ENCODE measurements at regions of chr16 and their contacts with region 1.

Region 1: DNA sequence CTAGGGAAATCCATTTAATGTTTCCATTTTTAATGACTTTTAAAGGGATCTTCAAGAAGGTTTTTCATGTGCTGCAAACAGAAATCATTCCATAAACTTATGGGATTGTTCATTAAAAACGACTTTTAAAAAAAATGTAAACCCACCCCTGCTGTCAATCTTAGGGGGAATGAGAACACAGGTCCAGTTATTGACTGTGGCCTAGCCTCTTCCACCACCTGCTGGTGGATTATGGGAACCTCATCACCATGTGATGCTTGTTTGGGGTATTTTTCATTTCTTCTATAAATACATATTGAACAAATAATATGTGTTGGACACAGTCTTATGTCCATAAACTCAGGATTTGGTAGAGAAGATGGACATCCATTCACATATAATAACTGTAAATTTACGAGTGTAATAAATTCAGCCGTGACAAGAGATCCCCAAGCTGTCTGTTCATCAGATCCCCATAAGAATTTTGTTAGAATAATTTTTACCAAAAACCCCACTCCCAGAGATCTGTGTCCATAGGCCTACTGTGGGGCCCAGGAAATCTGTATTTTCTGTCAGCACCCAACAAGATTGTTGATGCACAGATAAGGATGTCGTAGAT is 42.0 kb upstream of the TMC5 start:
- DNase-seq: peak in 6 of 10 donors; percentile 18 to 89 (median 43)

Region 2: DNA sequence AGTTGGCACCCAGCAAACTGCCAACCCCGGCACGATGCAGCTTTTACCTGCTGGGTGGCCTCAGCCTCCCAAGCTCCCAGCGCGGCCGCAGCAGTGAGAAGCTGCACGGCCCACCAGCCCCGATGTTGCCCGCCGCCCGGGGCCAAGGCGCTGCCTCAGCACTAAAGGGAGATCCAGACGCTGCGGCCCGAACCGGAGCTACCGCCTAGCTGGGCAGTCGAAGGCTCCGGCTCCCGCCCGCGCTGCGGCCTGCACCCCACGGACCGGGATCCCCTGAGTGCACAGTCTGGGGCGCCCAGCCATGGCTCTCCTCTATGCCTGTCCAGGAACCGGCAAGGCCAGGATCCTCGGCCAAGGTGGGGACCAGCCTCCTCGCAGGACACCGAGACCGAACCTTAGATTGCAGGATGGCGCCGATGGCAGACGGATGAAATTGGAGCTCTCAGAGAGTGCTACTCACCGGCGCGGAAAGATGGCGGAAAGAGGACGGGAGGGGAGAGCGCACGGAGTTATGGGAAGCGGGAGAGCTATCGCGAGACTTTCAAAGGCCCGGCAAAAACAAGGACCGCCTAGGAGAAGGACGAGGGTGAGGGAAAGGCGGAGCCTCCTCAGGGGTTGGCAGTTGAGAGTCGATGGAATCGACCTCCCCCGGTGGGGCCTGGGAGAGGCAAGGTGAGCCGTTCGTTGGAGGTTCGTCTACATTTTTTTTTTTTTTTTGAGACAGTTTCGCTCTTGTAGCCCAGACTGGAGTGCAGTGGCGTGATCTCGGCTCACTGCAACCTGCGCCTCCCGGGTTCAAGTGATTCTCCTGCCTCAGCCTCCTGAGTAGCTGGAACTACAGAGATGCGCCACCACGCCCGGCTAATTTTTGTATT is 585.6 kb before region 1 on chr16 and contains the start of gene RPS15A:
- intact Hi-C with region 1: loop called (anchors 10 kb)
- DNase-seq: peak; percentile 89 to 99 (median 92)

Region 3: GRCh38 chr16:18983565-18984424 is 391.9 kb before region 1 on chr16 and contains the start of gene TMC7:
- intact Hi-C with region 1: loop called (anchors 10 kb)
- DNase-seq: peak; percentile 82 to 99 (median 94)

Region 4: DNA sequence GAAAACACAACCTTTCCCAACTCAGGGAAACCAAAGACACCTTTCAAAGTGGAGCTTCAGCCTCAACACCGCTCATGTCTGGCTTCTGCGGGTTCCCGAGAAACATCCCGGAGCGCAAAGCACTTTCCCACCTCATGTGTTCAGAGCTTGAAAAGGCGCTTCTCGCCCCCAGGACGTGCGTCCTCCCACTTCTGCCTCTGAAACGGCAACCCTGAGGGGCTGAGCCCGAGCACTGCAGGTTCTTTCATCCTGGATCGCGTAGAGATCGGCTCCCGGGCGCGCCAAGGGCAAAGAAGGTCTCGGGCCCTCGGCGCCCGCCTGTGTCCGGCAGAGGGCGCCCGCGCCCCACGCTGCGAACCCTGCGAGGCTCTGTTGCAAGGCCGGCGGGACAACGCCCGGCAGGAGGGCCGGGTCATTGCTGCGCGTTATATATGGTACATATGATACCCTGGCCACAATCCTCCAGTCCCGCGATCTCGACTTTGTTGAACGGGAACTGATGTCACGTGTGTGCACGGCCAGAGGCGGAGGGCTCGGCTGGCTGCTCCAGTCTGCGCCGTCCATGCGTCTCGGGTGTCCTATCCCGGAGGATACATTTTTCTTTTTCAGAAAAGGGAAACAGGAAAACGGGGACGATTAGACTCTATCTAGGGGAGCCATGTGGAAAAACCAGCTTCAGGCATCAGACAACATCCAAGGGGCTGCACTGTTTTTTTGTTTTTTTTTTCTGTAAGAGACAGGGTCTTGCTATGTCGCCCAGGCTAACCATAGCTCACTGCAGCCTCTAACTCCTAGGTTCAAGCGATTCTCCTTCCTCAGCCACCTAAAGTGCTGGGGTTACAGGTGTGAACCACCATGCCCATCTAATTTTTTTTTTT is 289.1 kb before region 1 on chr16:
- intact Hi-C with region 1: loop called (anchors 1 kb)
- DNase-seq: peak; percentile 58 to 97 (median 82)

Region 5: GRCh38 chr16:19167710-19168370 is 207.8 kb before region 1 on chr16 and contains the start of gene SYT17:
- intact Hi-C with region 1: loop called (anchors 5 kb)
- DNase-seq: peak in 9 of 10 donors; percentile 28 to 94 (median 52)

Region 6: DNA sequence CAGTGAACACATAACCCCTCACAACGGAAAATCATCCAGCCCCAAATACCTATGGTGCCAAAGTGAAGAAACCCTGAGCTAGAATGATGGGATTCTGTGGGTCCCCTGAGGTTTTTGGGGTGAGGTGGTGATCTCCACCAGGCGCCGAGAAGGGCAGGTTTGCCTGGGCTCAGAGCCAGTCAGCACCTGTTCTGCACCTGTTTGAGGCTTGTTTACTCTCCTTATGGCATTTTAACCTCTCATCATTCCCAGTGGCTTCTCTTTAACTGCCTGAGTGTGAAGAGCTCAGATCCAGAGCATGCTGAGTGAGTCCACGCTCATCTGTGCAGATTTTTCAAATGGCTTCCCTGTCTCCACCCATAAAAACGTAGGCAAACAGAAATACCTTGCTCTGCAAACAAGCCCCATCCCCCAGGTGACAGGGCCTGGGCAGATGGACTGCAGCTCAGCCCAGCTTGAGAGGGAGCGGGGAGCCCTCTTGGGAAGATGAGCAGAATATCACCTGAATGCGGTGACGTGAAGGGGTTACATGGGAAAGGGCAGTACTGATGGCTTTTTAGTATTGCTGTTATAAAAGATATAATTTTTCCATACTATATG is 130.2 kb before region 1 on chr16:
- intact Hi-C with region 1: loop called (anchors 10 kb)
- DNase-seq: no peak

Region 7: GRCh38 chr16:19363740-19364139 is 11.9 kb before region 1 on chr16:
- intact Hi-C with region 1: no loop called
- DNase-seq: peak in 5 of 10 donors; percentile 13 to 33 (median 23)